PC-3 (cell line): ENCODE measurements at regions of chr2 and their contacts with region 1.

Region 1: GRCh38 chr2:8681786-8682692 is at the start of gene ID2:
- DNase-seq: peak; percentile 99
- ATAC-seq: peak; percentile 41
- H3K4me3 ChIP-seq: peak within 1 kb of the TSS; percentile 88
- H3K27ac ChIP-seq: peak within 1 kb of the TSS; percentile 16
- H3K4me1 ChIP-seq: peaks cover 42% of the 10 kb centered on the region
- H3K27me3 ChIP-seq: no peaks in the 10 kb centered on the region
- CTCF ChIP-seq: no peak
- total RNA-seq, gene ID2: 92.1 and 93.3 TPM in 2 replicates

Region 2: DNA sequence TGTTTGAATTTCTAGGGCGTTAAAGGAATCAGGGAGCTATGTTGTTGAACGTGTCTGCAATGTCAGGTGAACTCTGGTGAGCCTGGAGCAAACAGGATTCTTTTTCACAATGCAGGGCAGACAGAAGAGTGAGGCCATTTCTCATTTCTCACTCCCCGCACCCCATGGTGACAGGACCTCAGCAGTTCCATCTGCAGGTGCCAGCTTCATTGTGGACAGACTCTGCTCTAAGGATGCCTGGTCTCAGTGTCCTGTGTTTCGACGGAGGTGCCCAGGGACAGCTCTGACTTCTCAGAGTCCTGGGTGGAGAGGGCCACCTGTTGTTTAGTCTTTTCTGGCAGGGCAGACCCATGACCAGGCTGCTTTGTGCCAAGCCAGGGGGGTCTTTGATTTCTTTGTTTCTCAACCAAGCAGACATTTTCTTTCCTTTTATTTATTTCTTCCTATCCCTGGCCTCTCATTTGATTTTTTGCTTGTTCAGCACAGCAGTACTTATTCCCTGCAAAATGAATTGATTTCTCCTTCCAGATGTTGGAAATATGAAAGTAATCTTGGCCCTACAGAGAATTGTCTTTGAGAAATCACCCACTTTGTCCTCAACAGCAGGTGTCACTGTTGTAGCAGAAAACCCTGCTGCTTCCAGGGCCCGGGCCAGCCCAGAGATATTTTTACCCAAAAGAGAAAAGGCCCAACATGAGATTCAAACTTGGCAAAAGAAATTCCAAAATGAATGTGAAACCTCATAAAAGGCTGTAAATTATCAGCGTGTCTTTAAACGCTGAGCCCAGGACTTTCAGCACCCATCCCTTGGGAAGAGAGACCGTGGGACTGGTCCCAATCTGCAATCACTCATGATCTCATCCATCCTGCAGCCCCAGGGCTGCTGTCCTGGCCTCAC is 1563.2 kb before region 1 on chr2:
- CTCF ChIA-PET with region 1: no interaction called
- POLR2A ChIA-PET with region 1: no interaction called
- intact Hi-C with region 1: loop called (anchors 2 kb)
- DNase-seq: peak; percentile 61
- ATAC-seq: peak; percentile 89
- H3K4me3 ChIP-seq: no peak overlapping the region
- H3K27ac ChIP-seq: no peak overlapping the region
- H3K4me1 ChIP-seq: no peaks in the 10 kb centered on the region
- H3K27me3 ChIP-seq: no peaks in the 10 kb centered on the region
- CTCF ChIP-seq: peak; percentile 89

Region 3: DNA sequence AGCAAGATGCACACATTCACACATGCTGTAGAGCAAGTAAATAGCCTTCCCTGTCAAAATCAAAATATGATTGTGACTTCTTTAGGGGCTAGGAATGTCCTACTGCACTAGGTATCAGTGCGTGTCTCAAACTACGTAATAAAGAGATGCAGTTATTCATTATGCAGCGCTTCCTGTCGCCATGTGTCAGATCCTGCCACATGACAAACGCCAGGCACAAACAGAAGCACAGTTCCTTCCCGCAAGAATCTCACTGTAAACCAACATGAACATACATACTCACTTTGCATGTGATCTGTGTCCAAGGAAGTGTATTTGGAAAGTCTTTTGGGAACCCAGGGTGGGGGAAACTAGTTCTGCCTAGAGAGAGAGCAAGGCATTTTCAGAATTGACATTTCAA is 1165.0 kb before region 1 on chr2:
- CTCF ChIA-PET with region 1: no interaction called
- POLR2A ChIA-PET with region 1: no interaction called
- intact Hi-C with region 1: loop called (anchors 2 kb)
- DNase-seq: peak; percentile 89
- ATAC-seq: peak; percentile 83
- H3K4me3 ChIP-seq: peak overlapping the region; percentile 20; the same call in 1 of the 2 replicates
- H3K27ac ChIP-seq: peak overlapping the region; percentile 97
- H3K4me1 ChIP-seq: peaks cover 32% of the 10 kb centered on the region
- H3K27me3 ChIP-seq: no peaks in the 10 kb centered on the region
- CTCF ChIP-seq: no peak

Region 4: DNA sequence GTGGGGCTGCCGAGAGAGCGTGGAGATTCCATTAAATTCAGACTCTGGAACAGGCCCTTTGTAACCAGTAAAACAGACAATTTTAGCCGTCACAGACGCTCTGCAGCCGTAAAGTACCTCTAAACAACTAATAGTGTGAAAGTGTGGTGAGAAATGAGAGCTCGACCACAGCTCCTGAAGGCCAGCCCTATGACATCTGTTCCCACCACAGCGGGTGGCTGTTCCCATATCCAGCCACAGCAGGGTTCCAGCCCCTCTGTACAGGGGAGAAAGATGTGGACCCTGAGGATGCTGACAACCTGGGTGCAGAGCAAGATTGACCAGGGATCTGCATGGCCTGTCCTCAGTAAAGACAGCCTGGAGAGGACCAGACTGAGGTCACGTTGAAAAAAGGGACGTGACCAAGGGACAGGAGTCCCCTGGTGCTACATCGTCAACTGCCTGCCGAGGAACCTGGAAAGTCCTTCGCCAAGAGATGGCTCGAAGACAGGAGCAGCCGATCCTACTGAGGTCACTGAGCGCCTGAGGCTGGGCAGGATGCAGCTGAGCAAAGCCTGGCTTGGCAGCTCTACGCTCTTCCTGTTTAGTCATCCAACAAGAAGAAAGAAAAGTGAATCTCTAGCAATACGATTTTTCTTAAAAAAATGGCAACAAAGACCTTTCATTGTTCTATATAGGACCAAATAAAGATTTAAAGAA is 933.2 kb before region 1 on chr2:
- CTCF ChIA-PET with region 1: no interaction called
- POLR2A ChIA-PET with region 1: no interaction called
- intact Hi-C with region 1: loop called (anchors 5 kb)
- DNase-seq: peak; percentile 95
- ATAC-seq: peak; percentile 84
- H3K4me3 ChIP-seq: no peak overlapping the region
- H3K27ac ChIP-seq: peak overlapping the region; percentile 81
- H3K4me1 ChIP-seq: peaks cover 42% of the 10 kb centered on the region
- H3K27me3 ChIP-seq: no peaks in the 10 kb centered on the region
- CTCF ChIP-seq: no peak

Region 5: DNA sequence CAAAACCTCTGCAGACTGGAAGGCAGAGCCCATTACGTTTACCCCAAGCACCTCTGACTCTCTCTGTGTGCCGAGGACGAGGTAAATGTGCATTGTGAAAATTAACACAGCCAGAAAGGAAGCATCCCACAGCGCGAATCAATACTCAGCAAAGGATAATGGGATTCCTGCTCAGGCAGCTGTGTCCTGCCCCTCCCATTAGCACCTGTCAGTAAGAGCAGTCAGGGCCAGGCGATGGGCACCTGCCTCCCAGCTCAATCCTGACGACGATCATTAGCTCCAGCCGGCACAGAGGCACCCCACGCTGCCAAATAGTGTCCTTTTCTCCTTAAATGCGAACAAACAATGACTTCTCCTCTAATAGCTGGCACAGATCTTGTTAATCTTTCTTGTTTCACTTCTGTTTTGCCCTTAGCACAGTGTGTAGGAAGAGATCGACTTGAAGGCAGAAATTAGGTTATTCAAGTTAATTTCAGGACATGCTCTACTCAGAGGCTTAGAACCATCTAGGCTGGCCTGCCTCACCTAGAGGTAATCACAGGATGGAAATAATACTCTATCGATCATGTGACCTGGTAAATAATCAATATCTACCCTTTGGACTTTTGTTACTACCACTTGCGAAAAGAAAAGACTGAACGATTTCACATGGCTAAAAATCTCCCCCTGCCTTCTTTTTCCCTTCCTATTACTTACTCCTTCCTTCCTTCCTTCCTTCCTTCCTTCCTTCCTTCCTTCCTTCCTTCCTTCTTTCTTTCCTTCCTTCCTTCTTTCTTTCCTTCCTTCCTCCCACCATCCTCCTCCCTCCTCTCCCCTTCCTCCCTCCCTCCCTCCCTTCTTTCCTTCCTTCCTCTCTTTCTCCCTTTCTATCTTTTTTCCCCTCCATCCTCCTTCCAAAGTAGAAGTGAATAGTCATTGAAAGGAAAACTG is 488.1 kb before region 1 on chr2:
- CTCF ChIA-PET with region 1: no interaction called
- POLR2A ChIA-PET with region 1: no interaction called
- intact Hi-C with region 1: loop called (anchors 10 kb)
- DNase-seq: no peak
- ATAC-seq: no peak
- H3K4me3 ChIP-seq: no peak overlapping the region
- H3K27ac ChIP-seq: no peak overlapping the region
- H3K4me1 ChIP-seq: peaks cover 4% of the 10 kb centered on the region
- H3K27me3 ChIP-seq: no peaks in the 10 kb centered on the region
- CTCF ChIP-seq: no peak

Region 6: GRCh38 chr2:8389373-8390108 is 292.5 kb before region 1 on chr2:
- CTCF ChIA-PET with region 1: no interaction called
- POLR2A ChIA-PET with region 1: interaction called, 3 read pairs
- intact Hi-C with region 1: loop called (anchors 2 kb)
- DNase-seq: peak; percentile 63
- ATAC-seq: peak; percentile 81
- H3K4me3 ChIP-seq: no peak overlapping the region
- H3K27ac ChIP-seq: peak overlapping the region; percentile 49
- H3K4me1 ChIP-seq: peaks cover 16% of the 10 kb centered on the region
- H3K27me3 ChIP-seq: no peaks in the 10 kb centered on the region
- CTCF ChIP-seq: no peak

Region 7: DNA sequence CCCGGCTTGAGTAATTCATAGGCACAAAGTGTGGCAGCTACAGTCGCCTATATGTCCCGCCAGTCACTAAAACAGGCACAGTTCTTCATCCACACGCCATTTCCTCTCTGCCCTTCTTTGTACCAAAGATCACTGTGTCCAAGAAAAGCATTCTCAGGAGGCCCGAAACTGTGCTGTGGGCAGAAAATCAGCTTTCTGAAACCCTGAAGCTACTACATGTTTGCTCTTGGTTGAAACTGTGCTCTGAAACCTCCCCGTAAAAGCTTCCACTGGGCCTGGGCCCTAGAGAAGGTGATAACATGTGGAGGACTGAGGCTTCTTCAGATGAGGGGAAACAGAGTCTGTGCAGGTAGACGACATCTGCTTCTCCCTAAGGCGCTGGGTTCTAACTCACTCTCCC is 75.8 kb before region 1 on chr2:
- CTCF ChIA-PET with region 1: no interaction called
- POLR2A ChIA-PET with region 1: no interaction called
- intact Hi-C with region 1: loop called (anchors 2 kb)
- DNase-seq: no peak
- ATAC-seq: no peak
- H3K4me3 ChIP-seq: no peak overlapping the region
- H3K27ac ChIP-seq: peak overlapping the region; percentile 47
- H3K4me1 ChIP-seq: peaks cover 52% of the 10 kb centered on the region
- H3K27me3 ChIP-seq: no peaks in the 10 kb centered on the region
- CTCF ChIP-seq: no peak

Region 8: GRCh38 chr2:8819194-8819593 is 137.2 kb after region 1 on chr2:
- CTCF ChIA-PET with region 1: no interaction called
- POLR2A ChIA-PET with region 1: no interaction called
- intact Hi-C with region 1: no loop called
- DNase-seq: peak; percentile 9
- ATAC-seq: peak; percentile 78
- H3K4me3 ChIP-seq: no peak overlapping the region
- H3K27ac ChIP-seq: no peak overlapping the region
- H3K4me1 ChIP-seq: 0 out of 2 replicates have a peak, but pooled peaks cover 4% of the 10 kb centered on the region
- H3K27me3 ChIP-seq: no peaks in the 10 kb centered on the region
- CTCF ChIP-seq: no peak